Colonic mucosa (tissue), 4 donors: ENCODE measurements at regions of chr7 and their contacts with region 1.

Region 1: GRCh38 chr7:134750083-134751062 is 29.1 kb upstream of the CALD1 start:
- DNase-seq: peak; percentile 62
- H3K4me3 ChIP-seq: no peak overlapping the region
- H3K27ac ChIP-seq: no peak overlapping the region
- H3K4me1 ChIP-seq: no peaks in the 10 kb centered on the region
- H3K27me3 ChIP-seq: no peaks in the 10 kb centered on the region
- CTCF ChIP-seq: peak; percentile 67

Region 2: DNA sequence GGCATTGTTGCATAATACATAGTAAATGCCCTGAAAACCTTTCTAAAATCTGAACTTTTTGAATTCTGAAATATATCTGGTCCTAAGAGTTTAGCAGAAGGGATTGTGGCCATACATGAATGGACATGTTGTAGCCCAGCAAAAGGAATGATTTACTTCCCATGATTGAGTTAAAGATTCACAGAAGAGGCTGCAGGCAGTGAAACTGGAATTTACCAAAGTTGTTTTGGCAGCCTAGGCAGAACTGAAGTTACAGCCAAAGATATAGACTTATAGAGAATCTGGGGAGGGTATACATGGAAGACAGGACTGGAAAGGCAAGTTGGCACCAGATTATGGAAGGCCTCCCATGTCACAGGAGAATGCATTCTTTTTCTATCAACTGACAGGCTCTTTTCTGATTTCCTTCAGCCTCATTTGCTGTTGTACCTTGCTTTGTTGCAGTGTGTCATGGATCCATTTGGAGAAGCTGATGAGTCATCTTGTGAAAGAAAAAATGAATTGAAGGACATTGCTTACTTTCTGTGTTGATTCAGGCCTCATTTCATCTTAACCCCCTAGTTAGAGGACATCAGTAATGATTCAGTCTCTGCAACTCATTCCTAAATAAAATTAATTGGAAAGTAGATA is 979.4 kb before region 1 on chr7:
- intact Hi-C with region 1: no loop called
- DNase-seq: no peak
- H3K4me3 ChIP-seq: no peak overlapping the region
- H3K27ac ChIP-seq: no peak overlapping the region
- H3K4me1 ChIP-seq: no peaks in the 10 kb centered on the region
- H3K27me3 ChIP-seq: no peaks in the 10 kb centered on the region
- CTCF ChIP-seq: no peak

Region 3: GRCh38 chr7:134632937-134633540 is 117.3 kb before region 1 on chr7:
- intact Hi-C with region 1: loop called (anchors 5 kb)
- DNase-seq: no peak
- H3K4me3 ChIP-seq: no peak overlapping the region
- H3K27ac ChIP-seq: no peak overlapping the region
- H3K4me1 ChIP-seq: no peaks in the 10 kb centered on the region
- H3K27me3 ChIP-seq: no peaks in the 10 kb centered on the region
- CTCF ChIP-seq: peak; percentile 43